GM13977 (cell line): ENCODE measurements at regions of chr18 and their contacts with region 1.

Region 1: GRCh38 chr18:49500201-49500921 is 13.3 kb upstream of the C18orf32 start:
- DNase-seq: no peak
- CTCF ChIP-seq: no peak

Region 2: GRCh38 chr18:49359732-49360444 is 140.5 kb before region 1 on chr18:
- in situ Hi-C with region 1: no loop called
- DNase-seq: peak; percentile 8
- CTCF ChIP-seq: no peak

Region 3: DNA sequence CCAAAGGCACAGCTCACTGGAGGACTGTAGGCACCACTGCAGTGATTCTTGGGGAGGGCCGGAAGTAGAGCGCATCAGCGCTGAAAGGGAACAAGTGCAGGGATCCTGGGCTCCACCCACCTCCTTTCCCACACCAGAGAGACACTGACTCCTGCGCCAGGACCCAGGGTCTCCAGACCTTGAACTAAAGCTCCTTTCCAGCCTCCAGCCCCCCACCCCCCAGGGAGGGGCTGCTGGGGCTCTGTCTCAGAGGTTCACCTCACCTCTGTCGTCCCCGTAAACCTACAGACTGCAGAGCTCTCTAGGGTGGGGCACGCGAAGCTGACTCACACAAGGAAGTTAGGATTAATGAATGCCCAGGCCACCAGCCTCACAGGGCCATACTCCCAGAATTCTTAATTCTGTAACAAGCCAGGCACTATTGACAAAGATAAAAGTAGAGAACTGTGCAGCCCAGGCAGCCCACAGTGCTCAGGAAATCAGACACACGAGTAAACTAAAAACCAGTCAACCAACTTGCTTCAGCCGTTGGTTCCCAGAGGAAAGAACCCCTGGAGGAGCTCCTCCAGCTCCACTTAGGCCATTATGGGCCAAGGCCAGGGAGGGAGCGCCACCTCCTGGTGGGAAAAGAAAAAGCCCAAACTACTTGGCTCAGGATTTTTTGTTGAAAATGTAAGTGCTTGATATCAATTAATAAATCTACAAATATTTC is 358.1 kb after region 1 on chr18:
- in situ Hi-C with region 1: loop called (anchors 10 kb)
- DNase-seq: peak; percentile 70
- CTCF ChIP-seq: peak; percentile 80

Region 4: GRCh38 chr18:50038448-50038847 is 538.1 kb after region 1 on chr18:
- in situ Hi-C with region 1: no loop called
- DNase-seq: no peak
- CTCF ChIP-seq: no peak

Region 5: GRCh38 chr18:50061876-50062517 is 561.6 kb after region 1 on chr18:
- in situ Hi-C with region 1: no loop called
- DNase-seq: no peak
- CTCF ChIP-seq: no peak